ENCODE measurements at regions of chr5 and their contacts with region 1.

Region 1: DNA sequence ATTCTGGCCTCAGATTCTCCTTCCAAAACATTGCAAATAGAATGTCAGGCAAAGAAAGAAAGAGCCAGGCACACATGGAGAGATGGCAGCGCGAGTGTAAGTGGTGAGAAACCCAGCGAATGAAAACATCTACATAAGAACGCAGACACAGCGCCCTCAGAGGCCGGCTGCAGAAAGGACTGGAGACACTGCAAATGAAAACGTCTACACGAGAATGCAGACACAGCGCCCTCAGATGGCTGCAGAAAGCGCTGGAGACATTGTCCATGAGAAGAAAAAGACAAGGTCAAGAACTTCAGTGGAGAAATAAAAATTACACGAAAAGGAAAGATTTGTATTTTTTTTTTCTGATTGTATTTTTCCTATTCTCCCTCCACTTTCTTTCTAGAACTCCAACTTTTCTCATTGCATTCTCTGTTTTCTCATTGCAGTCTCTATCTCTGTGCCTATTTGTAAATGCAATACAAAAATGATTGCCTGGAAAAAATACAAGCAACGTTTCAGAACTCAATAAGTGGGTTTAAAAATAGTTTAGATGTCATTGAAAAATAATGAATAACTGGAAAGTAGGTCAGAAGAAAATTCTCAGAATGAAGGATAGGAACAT is 117.9 kb upstream of the LPCAT1 start:
- DNase-seq: peak; percentile 90
- ATAC-seq: peak; percentile 94
- H3K4me3 Mint-ChIP-seq: no peak overlapping the region
- H3K27ac Mint-ChIP-seq: no peak overlapping the region
- H3K4me1 Mint-ChIP-seq: peaks cover 3% of the 10 kb centered on the region
- H3K27me3 Mint-ChIP-seq: peaks cover 23% of the 10 kb centered on the region

Region 2: DNA sequence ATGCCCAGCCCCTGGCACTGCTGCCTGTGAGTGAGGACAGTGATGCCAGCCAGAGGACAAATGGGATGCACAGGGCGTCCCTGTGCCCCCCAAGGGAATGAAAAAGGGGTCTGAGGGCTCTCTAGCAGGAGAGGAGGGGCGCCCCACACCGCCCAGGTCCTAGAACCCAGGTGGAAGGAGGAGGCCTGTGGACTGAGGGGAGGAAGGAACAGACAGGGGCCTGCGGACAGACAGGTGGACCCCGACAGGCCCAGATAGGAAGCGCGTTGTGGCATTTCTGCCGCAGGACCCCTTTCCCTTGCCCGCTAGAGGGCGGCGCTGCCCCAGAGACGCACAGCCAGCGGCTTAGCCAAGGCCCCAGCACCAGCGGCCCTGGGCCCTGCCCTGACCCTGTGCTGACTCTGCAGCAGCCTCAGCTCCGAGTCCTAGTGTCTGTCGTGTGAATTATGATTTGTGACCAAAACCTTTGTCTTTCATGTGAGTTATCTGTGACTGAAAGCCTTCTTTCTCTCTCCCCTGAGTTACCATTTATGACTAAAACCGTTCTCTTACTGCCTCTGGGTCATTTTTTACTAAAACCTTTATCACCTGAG is 718.3 kb before region 1 on chr5:
- CTCF ChIA-PET with region 1: interaction called, 5 read pairs
- POLR2A ChIA-PET with region 1: no interaction called
- intact Hi-C with region 1: loop called in 1 of 2 experiments (anchors 5 kb)
- DNase-seq: peak; percentile 87
- ATAC-seq: peak; percentile 88
- H3K4me3 Mint-ChIP-seq: no peak overlapping the region
- H3K27ac Mint-ChIP-seq: no peak overlapping the region
- H3K4me1 Mint-ChIP-seq: peaks cover 26% of the 10 kb centered on the region
- H3K27me3 Mint-ChIP-seq: peaks cover 25% of the 10 kb centered on the region

Region 3: DNA sequence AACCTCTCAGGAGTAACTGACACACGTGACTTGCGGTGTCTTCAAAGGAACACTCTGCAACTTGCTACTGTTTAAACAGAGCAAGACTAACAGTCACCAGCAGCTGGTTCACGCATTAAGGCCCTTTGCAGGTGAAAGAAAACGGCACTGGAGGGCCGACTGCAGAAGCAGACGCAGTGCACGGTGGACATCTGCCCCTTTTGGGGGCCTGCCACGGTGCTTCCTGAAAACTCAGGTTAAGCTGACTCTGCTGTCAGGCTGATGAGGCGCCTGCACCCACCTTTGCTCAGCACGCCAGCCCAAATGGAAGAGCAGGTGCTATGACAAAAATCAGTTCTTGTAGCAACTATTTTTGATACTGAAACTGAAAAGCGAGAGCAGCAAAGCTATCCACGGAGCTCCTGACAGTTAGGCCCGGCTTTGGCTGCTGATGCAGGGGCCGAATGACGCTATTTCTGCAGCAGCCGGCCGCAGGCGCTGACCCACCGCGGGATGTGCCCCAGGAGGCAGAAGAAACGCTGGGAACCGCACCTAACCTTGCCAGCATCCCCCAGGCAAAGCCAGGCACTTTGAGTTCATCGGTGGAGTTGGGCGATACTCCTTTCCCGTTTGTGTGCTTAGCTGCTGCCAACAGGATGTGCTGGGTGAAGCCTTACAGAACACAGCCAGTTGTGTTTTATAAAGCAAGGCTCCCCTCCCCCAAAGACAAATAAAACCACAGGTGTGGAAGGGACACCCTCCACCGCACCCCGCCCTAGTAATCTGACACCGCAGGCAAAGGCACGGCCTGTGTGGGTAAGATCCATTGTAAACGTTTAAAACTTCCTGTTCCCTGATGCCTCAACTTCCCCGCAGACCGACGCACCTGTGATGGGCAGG is 325.7 kb before region 1 on chr5:
- CTCF ChIA-PET with region 1: interaction called, 14 read pairs
- POLR2A ChIA-PET with region 1: no interaction called
- intact Hi-C with region 1: no loop called
- DNase-seq: peak; percentile 74
- ATAC-seq: peak; percentile 68
- H3K4me3 Mint-ChIP-seq: peak overlapping the region; percentile 49
- H3K27ac Mint-ChIP-seq: peak overlapping the region; percentile 89
- H3K4me1 Mint-ChIP-seq: peaks cover 61% of the 10 kb centered on the region
- H3K27me3 Mint-ChIP-seq: no peaks in the 10 kb centered on the region

Region 4: GRCh38 chr5:1380011-1380817 is 261.4 kb before region 1 on chr5:
- CTCF ChIA-PET with region 1: interaction called, 18 read pairs
- POLR2A ChIA-PET with region 1: no interaction called
- intact Hi-C with region 1: loop called (anchors 1 to 2 kb)
- DNase-seq: peak; percentile 74
- ATAC-seq: peak; percentile 86
- H3K4me3 Mint-ChIP-seq: peak overlapping the region; percentile 32
- H3K27ac Mint-ChIP-seq: no peak overlapping the region
- H3K4me1 Mint-ChIP-seq: peaks cover 10% of the 10 kb centered on the region
- H3K27me3 Mint-ChIP-seq: peaks cover 4% of the 10 kb centered on the region

Region 5: DNA sequence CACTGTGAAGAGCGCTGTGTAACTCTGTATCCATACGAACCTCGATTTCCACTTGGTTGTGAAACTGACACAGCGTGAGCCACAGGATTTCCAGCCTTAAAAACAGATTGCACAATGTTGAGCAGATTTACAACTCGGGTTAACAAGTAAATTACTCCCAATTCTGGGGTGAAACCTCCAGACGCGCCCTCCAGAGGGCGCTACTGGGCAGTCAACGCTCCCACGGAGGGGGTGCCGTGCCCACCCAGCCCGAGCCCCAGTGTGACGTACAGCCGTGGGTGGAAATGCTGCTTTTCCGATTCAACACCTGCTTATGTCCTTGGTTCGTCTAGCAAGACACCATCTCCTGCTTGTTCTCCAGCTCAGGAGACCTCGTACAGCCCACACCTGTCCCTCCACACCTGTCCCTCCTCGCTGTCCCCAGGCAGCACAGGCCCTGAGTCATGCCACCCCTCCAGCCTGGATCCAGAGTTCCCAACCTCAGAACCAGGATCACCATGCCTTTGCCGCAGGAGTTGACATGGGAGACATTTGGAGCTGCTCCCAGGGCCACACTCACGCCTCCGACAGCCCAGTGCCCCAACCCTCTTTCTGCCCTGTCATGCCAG is 162.0 kb before region 1 on chr5:
- CTCF ChIA-PET with region 1: interaction called, 30 read pairs
- POLR2A ChIA-PET with region 1: interaction called, 3 read pairs
- intact Hi-C with region 1: loop called (anchors 1 kb)
- DNase-seq: peak; percentile 65
- ATAC-seq: peak; percentile 51
- H3K4me3 Mint-ChIP-seq: no peak overlapping the region
- H3K27ac Mint-ChIP-seq: no peak overlapping the region
- H3K4me1 Mint-ChIP-seq: peaks cover 2% of the 10 kb centered on the region
- H3K27me3 Mint-ChIP-seq: no peaks in the 10 kb centered on the region

Region 6: GRCh38 chr5:1594357-1595106 is 47.1 kb before region 1 on chr5:
- CTCF ChIA-PET with region 1: interaction called, 3 read pairs
- POLR2A ChIA-PET with region 1: no interaction called
- intact Hi-C with region 1: loop called in 1 of 2 experiments (anchors 1 kb)
- DNase-seq: peak; percentile 84
- ATAC-seq: peak; percentile 89
- H3K4me3 Mint-ChIP-seq: peak overlapping the region; percentile 67
- H3K27ac Mint-ChIP-seq: peak overlapping the region; percentile 31
- H3K4me1 Mint-ChIP-seq: peaks cover 13% of the 10 kb centered on the region
- H3K27me3 Mint-ChIP-seq: no peaks in the 10 kb centered on the region

Region 7: GRCh38 chr5:1910081-1910760 is 268.6 kb after region 1 on chr5:
- CTCF ChIA-PET with region 1: no interaction called
- POLR2A ChIA-PET with region 1: no interaction called
- intact Hi-C with region 1: no loop called
- DNase-seq: no peak
- ATAC-seq: no peak
- H3K4me3 Mint-ChIP-seq: no peak overlapping the region
- H3K27ac Mint-ChIP-seq: no peak overlapping the region
- H3K4me1 Mint-ChIP-seq: no peaks in the 10 kb centered on the region
- H3K27me3 Mint-ChIP-seq: peaks cover 4% of the 10 kb centered on the region